Panc1 (cell line): ENCODE measurements at regions of chr6 and their contacts with region 1.

Region 1: GRCh38 chr6:108052706-108053105 is 21.8 kb downstream of the OSTM1 start:
- DNase-seq: no peak
- ATAC-seq: no peak
- H3K4me3 ChIP-seq: no peak overlapping the region
- H3K27ac ChIP-seq: no peak overlapping the region
- H3K4me1 ChIP-seq: no peaks in the 10 kb centered on the region
- H3K27me3 ChIP-seq: no peaks in the 10 kb centered on the region
- CTCF ChIP-seq: no peak

Region 2: DNA sequence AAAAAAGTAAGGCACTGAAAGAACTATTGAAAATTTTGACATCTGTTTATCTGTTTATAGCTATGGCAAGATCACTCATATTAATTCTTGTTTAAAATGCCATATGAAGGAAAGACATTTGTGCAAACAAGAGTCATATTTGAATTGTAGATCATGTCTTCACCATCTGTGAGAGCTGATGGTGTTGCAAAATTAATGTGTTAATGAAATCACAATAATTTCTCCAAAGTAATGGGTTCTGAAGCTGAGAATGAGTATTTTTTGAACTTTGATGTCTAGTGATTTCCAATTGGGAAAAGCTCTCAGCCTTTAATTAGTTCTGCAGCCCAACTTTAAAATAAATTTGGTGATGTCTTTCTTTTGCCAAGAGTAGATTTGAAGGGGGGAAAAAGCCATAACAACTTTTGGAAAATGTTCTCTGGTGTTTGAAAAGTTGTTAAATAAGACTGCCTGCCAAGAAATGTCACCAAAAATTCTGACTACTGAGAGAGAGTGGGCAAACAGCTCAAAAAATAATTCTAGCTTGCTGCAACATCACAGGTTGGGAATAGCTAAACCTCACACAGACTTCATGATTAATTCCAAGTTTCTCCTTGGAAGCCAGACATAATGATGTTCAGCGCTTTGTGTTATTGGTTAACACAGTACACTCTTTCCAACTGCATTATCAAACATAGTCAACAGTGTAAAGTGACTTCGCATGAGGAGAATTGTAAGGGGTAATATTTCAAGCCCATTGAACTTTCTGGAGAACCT is 420.1 kb before region 1 on chr6:
- CTCF ChIA-PET with region 1: no interaction called
- POLR2A ChIA-PET with region 1: interaction called, 14 read pairs
- in situ Hi-C with region 1: no loop called
- intact Hi-C with region 1: no loop called
- DNase-seq: no peak
- ATAC-seq: no peak
- H3K4me3 ChIP-seq: no peak overlapping the region
- H3K27ac ChIP-seq: no peak overlapping the region
- H3K4me1 ChIP-seq: peaks cover 3% of the 10 kb centered on the region; the same call in 1 of the 2 replicates
- H3K27me3 ChIP-seq: no peaks in the 10 kb centered on the region; the same call in 1 of the 2 replicates
- CTCF ChIP-seq: no peak

Region 3: GRCh38 chr6:107982486-107982885 is 70.2 kb before region 1 on chr6:
- CTCF ChIA-PET with region 1: interaction called, 4 read pairs
- POLR2A ChIA-PET with region 1: no interaction called
- in situ Hi-C with region 1: no loop called
- intact Hi-C with region 1: loop called (anchors 2 kb)
- DNase-seq: no peak
- ATAC-seq: no peak
- H3K4me3 ChIP-seq: no peak overlapping the region
- H3K27ac ChIP-seq: no peak overlapping the region
- H3K4me1 ChIP-seq: no peaks in the 10 kb centered on the region
- H3K27me3 ChIP-seq: no peaks in the 10 kb centered on the region
- CTCF ChIP-seq: no peak